ENCODE measurements at regions of chr5 and their contacts with region 1.

Region 1: DNA sequence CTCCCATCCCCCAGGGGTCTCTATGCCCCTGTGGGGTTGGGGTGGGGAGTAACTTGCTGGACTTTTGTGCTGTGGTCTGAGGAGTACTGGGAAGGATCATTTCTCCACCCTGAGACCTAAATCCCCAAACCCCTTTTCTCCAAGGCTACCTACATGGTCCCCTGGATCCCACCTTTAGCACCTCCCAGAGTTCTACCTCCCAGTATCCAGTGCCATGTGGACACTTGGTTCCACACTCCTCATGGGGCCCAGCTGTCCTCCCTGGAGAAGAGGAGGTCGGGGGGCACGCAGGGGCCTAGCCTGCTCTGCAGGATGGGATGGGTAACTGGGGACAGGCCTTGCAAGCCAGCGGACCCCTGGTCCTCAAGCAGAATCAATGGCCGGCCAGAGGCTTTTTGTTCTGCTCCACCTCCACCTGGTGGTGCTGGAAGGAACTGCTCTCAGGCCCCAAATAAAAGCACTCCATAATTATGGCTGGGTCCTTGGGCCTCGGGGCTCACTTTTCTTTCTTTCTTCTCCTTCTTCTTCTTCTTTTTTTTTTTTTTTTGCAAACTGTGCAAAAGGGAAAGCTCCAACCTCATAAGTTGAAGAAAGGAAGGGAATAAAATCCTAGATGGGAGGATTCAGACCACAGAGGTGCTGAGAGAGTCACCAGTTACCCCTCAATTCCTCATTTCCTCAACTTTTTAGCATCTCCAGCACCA is 68.4 kb downstream of the PSD2 start:
- DNase-seq: peak in 1 of 2 experiments; percentile 89
- H3K4me3 ChIP-seq: no peak overlapping the region
- H3K27ac ChIP-seq: no peak overlapping the region
- H3K4me1 ChIP-seq: no peaks in the 10 kb centered on the region
- H3K27me3 ChIP-seq: no peaks in the 10 kb centered on the region
- CTCF ChIP-seq: peak; percentile 72 to 89 (median 84)
- EP300 ChIP-seq: no peak
- POLR2A ChIP-seq: no peak
- RAD21 ChIP-seq: peak; percentile 79 to 86

Region 2: DNA sequence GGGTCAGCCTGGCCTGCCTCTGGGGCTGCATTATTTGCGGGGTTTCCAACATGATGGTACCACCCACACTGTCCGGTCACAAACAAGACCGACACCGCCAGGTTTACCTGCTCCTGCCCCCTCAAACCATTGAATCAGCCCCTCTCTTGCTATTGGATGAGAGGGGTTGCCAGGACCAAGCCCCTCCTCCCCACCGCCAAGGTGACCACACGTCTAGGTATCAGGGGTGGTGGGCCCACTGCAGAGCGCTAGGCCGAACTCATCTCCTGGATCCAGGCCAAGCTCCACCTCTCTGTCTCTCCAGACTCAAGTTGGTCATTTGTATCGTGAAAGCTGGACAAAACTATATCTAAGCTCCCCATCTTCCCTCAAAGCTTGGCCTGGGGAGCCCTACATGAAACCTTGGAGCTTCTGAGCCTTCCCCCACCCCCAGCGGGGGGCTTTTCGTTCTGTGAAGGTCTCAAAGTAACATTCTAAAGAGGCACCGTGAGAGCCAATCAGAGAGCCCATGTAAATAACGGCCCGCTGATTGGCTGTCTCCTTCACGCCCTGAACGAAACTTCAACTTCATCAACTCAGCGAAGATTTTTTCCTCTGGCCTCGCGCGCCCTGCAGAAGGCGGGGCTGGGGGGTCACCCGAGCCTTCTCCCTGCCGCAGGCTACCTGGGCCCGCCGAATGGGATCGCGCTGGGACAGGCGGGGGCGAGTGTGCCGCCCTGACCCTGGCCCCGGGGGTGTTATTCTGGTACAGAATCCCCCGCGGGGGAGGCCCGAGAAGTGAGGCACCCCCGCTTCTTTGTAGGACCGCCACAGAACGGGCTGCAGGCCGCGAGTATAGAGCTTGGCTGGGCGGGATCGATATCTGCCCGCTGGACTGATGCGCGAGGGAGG is 118.0 kb before region 1 on chr5:
- CTCF ChIA-PET with region 1: no interaction called
- POLR2A ChIA-PET with region 1: no interaction called
- DNase-seq: peak; percentile 75 to 89
- H3K4me3 ChIP-seq: peak overlapping the region; percentile 30 to 64 (median 56)
- H3K27ac ChIP-seq: no peak overlapping the region
- H3K4me1 ChIP-seq: peaks cover 3 to 44% (median 29%) of the 10 kb centered on the region in 4 experiments
- H3K27me3 ChIP-seq: peaks cover 24 to 50% (median 42%) of the 10 kb centered on the region in 4 experiments
- CTCF ChIP-seq: no peak
- EP300 ChIP-seq: no peak
- POLR2A ChIP-seq: no peak
- RAD21 ChIP-seq: no peak

Region 3: GRCh38 chr5:139774980-139775661 is 88.9 kb before region 1 on chr5:
- CTCF ChIA-PET with region 1: interaction called, 34 read pairs
- POLR2A ChIA-PET with region 1: interaction called, 4 read pairs
- DNase-seq: peak; percentile 63 to 100
- H3K4me3 ChIP-seq: peak overlapping the region in 1 of 4 experiments; percentile 28; a peak in 1 of 8 replicates
- H3K27ac ChIP-seq: no peak overlapping the region
- H3K4me1 ChIP-seq: peaks cover 0 to 5% (median 4%) of the 10 kb centered on the region in 4 experiments; a peak in 4 of 7 replicates
- H3K27me3 ChIP-seq: peaks cover 0 to 5% (median 2%) of the 10 kb centered on the region in 4 experiments; a peak in 3 of 7 replicates
- CTCF ChIP-seq: peak in 2 of 3 experiments; percentile 96 to 97; a peak in 3 of 4 replicates
- EP300 ChIP-seq: no peak
- POLR2A ChIP-seq: no peak
- RAD21 ChIP-seq: peak; percentile 61 to 73

Region 4: DNA sequence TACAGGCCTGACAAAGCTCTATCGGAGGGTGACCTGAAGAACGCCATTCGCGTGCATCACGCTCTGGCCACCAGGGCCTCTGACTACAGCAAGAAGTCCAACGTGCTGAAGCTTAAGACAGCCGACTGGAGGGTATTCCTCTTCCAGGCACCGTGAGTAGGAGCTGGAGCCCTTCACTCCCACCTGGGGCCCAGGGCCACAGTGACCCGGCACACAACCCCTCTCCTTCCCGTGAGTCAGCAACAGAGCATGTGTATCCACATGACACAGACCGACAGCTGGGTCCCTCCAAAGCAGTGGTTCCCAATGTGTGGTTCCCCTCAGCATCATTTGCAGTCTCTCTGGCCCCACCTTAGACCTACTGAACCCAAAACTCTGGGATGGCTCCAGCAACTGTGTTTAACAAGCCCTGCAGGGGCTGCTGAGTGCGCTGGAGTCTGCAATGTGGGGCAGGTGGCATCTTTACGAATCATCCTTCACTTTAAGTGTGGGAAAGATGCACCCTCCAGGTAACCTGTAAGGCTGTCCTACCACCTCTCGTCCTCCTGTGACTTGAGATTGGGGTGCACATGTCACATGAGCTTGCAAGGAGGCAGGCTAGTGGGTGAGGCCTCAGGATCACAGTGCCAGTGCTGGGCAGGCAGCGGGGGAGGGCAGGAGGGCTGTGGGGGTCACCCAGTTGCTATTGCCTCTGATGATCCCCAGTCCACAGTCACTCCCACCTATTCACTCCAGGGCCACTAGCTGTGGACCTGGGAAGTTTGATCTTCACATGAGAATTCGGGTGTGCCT is 26.2 kb before region 1 on chr5:
- CTCF ChIA-PET with region 1: interaction called, 42 read pairs
- POLR2A ChIA-PET with region 1: no interaction called
- DNase-seq: no peak
- H3K4me3 ChIP-seq: no peak overlapping the region
- H3K27ac ChIP-seq: no peak overlapping the region
- H3K4me1 ChIP-seq: no peaks in the 10 kb centered on the region
- H3K27me3 ChIP-seq: peaks cover 0 to 4% (median 0%) of the 10 kb centered on the region in 4 experiments; a peak in 2 of 7 replicates
- CTCF ChIP-seq: peak in 1 of 3 experiments; percentile 8; a peak in 1 of 4 replicates
- EP300 ChIP-seq: no peak
- POLR2A ChIP-seq: no peak
- RAD21 ChIP-seq: no peak

Region 5: DNA sequence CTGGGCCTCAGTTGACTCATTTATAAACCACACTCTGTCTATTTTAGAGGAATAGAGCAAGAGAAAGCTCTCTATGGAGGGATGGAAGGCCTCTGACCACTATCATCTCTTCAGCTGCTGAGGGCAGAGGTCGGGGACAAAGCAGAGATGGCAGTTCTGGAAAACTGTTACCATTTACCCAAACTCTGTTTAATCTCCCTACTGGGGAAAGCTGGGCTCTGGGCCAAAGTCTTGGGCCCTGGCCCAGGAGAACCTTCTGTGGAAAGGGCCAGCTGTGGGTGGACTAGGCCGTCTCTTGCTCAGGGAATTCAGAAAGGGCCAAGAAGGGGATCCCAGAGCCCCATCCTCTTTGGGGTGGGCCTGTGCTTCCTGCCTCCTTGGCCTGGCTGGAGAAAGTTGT is 31.6 kb after region 1 on chr5:
- CTCF ChIA-PET with region 1: interaction called, 24 read pairs
- POLR2A ChIA-PET with region 1: no interaction called
- DNase-seq: no peak
- H3K4me3 ChIP-seq: no peak overlapping the region
- H3K27ac ChIP-seq: no peak overlapping the region
- H3K4me1 ChIP-seq: no peaks in the 10 kb centered on the region
- H3K27me3 ChIP-seq: peaks cover 4 to 27% (median 17%) of the 10 kb centered on the region in 4 experiments
- CTCF ChIP-seq: no peak
- EP300 ChIP-seq: no peak
- POLR2A ChIP-seq: no peak
- RAD21 ChIP-seq: no peak

Region 6: DNA sequence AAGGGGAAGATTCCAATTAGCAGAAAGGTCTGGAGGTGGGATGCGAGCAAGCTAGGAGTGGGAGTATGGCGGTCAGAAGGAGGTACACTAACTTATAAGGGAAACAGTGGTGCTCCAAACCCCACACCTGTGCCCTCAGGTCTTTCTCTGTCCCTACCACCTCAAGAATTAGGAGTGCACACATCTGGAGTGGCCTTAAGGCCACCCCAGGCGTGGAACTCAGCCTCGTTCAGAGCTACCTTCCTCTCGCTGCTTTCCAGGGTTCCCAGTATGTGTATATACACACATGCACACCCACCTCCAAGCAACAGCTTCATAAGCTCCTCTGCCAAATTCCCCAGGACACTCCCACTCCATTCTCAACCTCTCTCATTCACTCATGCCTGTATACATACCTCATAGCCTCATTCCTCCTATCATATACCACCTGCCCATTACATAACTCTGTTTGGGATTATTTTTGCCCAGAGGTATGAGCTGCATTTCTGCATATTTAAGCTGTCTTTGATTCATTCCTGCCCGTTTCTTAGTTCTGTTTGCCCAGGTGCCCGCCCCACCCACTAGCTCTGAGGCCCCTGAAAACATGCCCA is 50.3 kb after region 1 on chr5:
- CTCF ChIA-PET with region 1: interaction called, 12 read pairs
- POLR2A ChIA-PET with region 1: no interaction called
- DNase-seq: peak in 1 of 2 experiments; percentile 32
- H3K4me3 ChIP-seq: no peak overlapping the region
- H3K27ac ChIP-seq: no peak overlapping the region
- H3K4me1 ChIP-seq: peaks cover 2 to 7% (median 5%) of the 10 kb centered on the region in 4 experiments; a peak in 2 of 7 replicates
- H3K27me3 ChIP-seq: no peaks in the 10 kb centered on the region
- CTCF ChIP-seq: no peak
- EP300 ChIP-seq: no peak
- POLR2A ChIP-seq: no peak
- RAD21 ChIP-seq: no peak

Region 7: DNA sequence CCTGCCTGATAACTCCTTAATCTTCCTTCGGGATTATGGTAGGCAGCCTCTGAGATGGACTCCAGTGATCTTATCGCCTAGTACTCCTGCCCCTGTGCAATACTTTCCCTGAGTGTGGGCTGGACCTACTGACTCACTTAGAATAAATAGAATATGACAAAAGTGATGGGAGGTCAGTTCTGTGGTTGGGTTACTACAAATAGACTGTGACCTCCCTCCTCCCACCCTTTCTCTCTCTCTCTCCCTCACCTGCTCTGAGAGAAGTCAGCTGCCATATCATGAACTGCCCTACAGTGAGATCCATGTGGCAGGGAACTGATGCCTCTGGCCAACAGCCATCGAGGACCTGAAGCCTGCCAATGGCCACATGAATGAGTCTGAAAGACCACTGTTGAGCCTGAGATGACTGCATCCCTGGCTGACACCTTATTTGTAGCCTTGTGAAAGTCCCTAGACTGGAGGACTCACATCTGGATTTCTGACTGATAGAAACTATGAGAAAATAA is 147.3 kb after region 1 on chr5:
- CTCF ChIA-PET with region 1: no interaction called
- POLR2A ChIA-PET with region 1: no interaction called
- DNase-seq: no peak
- H3K4me3 ChIP-seq: no peak overlapping the region
- H3K27ac ChIP-seq: no peak overlapping the region
- H3K4me1 ChIP-seq: no peaks in the 10 kb centered on the region
- H3K27me3 ChIP-seq: peaks cover 0 to 2% (median 0%) of the 10 kb centered on the region in 4 experiments; a peak in 2 of 7 replicates
- CTCF ChIP-seq: no peak
- EP300 ChIP-seq: no peak
- POLR2A ChIP-seq: no peak
- RAD21 ChIP-seq: no peak